Activated B cell treated with CpG ODN at 0.5 μM for 24 hours (primary cell): ENCODE measurements at regions of chr9 and their contacts with region 1.

Region 1: GRCh38 chr9:122350638-122351355 is 20.0 kb upstream of the PTGS1 start:
- DNase-seq: peak; percentile 75
- ATAC-seq: peak; percentile 90
- H3K4me3 Mint-ChIP-seq: no peak overlapping the region
- H3K27ac Mint-ChIP-seq: no peak overlapping the region
- H3K4me1 Mint-ChIP-seq: peaks cover 8% of the 10 kb centered on the region
- H3K27me3 Mint-ChIP-seq: peaks cover 35% of the 10 kb centered on the region
- CTCF ChIP-seq: no peak

Region 2: GRCh38 chr9:121545875-121546423 is 804.8 kb before region 1 on chr9:
- CTCF ChIA-PET with region 1: no interaction called
- POLR2A ChIA-PET with region 1: no interaction called
- intact Hi-C with region 1: loop called (anchors 2 kb)
- DNase-seq: peak; percentile 68
- ATAC-seq: peak; percentile 86
- H3K4me3 Mint-ChIP-seq: no peak overlapping the region
- H3K27ac Mint-ChIP-seq: no peak overlapping the region
- H3K4me1 Mint-ChIP-seq: no peaks in the 10 kb centered on the region
- H3K27me3 Mint-ChIP-seq: peaks cover 24% of the 10 kb centered on the region
- CTCF ChIP-seq: no peak

Region 3: GRCh38 chr9:122383992-122384461 is 33.2 kb after region 1 on chr9:
- CTCF ChIA-PET with region 1: no interaction called
- POLR2A ChIA-PET with region 1: no interaction called
- intact Hi-C with region 1: no loop called
- DNase-seq: no peak
- ATAC-seq: no peak
- H3K4me3 Mint-ChIP-seq: no peak overlapping the region
- H3K27ac Mint-ChIP-seq: no peak overlapping the region
- H3K4me1 Mint-ChIP-seq: peaks cover 19% of the 10 kb centered on the region
- H3K27me3 Mint-ChIP-seq: no peaks in the 10 kb centered on the region
- CTCF ChIP-seq: no peak

Region 4: DNA sequence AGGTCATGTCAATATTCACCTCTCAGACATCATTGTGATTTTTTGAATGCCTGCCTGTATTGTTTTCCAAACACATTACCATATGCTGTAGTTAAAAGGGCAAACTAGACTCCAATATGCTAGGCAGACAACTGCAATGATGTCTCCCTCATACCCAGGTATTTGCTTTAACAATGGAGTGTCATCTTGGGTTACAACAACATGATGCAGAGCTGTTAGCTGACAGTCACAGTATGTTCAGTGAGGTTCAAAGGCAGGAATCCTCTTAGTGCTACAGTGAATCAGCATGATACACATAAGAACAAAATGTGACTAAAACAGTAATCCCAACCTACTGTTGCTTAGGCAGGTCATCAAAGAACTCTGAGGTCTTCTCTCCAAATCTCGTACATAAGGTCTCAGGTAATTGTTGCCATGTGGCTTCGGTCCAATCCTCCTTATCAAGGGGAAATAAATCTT is 102.9 kb after region 1 on chr9:
- CTCF ChIA-PET with region 1: interaction called, 6 read pairs
- POLR2A ChIA-PET with region 1: no interaction called
- intact Hi-C with region 1: loop called (anchors 1 kb)
- DNase-seq: no peak
- ATAC-seq: no peak
- H3K4me3 Mint-ChIP-seq: no peak overlapping the region
- H3K27ac Mint-ChIP-seq: no peak overlapping the region
- H3K4me1 Mint-ChIP-seq: no peaks in the 10 kb centered on the region
- H3K27me3 Mint-ChIP-seq: peaks cover 22% of the 10 kb centered on the region
- CTCF ChIP-seq: no peak

Region 5: DNA sequence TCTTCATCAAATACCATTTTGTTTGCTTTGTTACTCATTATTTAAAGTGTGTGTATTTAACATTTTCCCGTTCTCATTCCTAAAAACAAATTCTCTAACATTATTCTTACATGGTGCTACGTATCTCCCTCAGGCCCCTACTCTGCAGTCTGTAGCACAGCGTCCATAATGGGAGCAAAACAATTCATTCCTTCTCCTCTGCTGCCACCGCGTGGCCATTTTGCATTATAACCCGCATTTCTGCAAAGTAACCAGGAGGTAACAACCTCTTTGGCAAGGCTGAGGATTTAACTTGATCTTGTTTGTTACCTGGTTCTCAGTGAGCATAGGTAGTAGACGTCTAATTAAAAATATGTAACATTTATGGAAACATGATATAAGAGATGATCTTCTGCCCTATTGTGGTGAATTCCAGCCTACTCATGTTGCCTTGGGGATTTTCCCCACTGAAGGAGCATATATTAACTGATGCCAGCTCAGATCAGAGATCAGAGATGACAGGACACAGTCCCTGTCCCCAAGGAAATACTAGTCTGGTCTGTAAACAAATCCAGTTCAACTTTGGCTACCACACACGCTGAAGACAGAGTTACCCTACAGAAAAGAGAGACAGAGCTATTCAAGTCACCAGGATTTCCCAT is 459.6 kb after region 1 on chr9:
- CTCF ChIA-PET with region 1: interaction called, 3 read pairs
- POLR2A ChIA-PET with region 1: no interaction called
- intact Hi-C with region 1: loop called (anchors 1 kb)
- DNase-seq: peak; percentile 54
- ATAC-seq: peak; percentile 88
- H3K4me3 Mint-ChIP-seq: no peak overlapping the region
- H3K27ac Mint-ChIP-seq: no peak overlapping the region
- H3K4me1 Mint-ChIP-seq: peaks cover 9% of the 10 kb centered on the region
- H3K27me3 Mint-ChIP-seq: no peaks in the 10 kb centered on the region
- CTCF ChIP-seq: no peak